ENCODE measurements at regions of chr2 and their contacts with region 1.

Region 1: GRCh38 chr2:46887028-46887885 is 28.3 kb downstream of the MCFD2 start:
- DNase-seq: no peak
- H3K4me3 ChIP-seq: no peak overlapping the region
- H3K27ac ChIP-seq: no peak overlapping the region
- H3K4me1 ChIP-seq: peaks cover 6% of the 10 kb centered on the region
- H3K27me3 ChIP-seq: no peaks in the 10 kb centered on the region
- CTCF ChIP-seq: no peak
- POLR2A ChIP-seq: no peak

Region 2: GRCh38 chr2:46481198-46482193 is 405.8 kb before region 1 on chr2:
- CTCF ChIA-PET with region 1: no interaction called
- POLR2A ChIA-PET with region 1: no interaction called
- dilution Hi-C with region 1: no loop called
- intact Hi-C with region 1: loop called (anchors 5 kb)
- DNase-seq: peak; percentile 91
- H3K4me3 ChIP-seq: no peak overlapping the region
- H3K27ac ChIP-seq: peak overlapping the region; percentile 58
- H3K4me1 ChIP-seq: peaks cover 17% of the 10 kb centered on the region
- H3K27me3 ChIP-seq: no peaks in the 10 kb centered on the region
- CTCF ChIP-seq: no peak
- POLR2A ChIP-seq: no peak

Region 3: GRCh38 chr2:46632349-46632748 is 254.9 kb before region 1 on chr2:
- CTCF ChIA-PET with region 1: interaction called, 15 read pairs
- POLR2A ChIA-PET with region 1: no interaction called
- dilution Hi-C with region 1: no loop called
- intact Hi-C with region 1: loop called (anchors 1 kb)
- DNase-seq: peak; percentile 79
- H3K4me3 ChIP-seq: no peak overlapping the region
- H3K27ac ChIP-seq: no peak overlapping the region
- H3K4me1 ChIP-seq: no peaks in the 10 kb centered on the region
- H3K27me3 ChIP-seq: no peaks in the 10 kb centered on the region
- CTCF ChIP-seq: peak; percentile 21 to 41
- POLR2A ChIP-seq: no peak

Region 4: GRCh38 chr2:46650556-46651001 is 236.7 kb before region 1 on chr2:
- CTCF ChIA-PET with region 1: interaction called, 13 read pairs
- POLR2A ChIA-PET with region 1: no interaction called
- dilution Hi-C with region 1: no loop called
- intact Hi-C with region 1: loop called (anchors 1 kb)
- DNase-seq: peak; percentile 80
- H3K4me3 ChIP-seq: no peak overlapping the region
- H3K27ac ChIP-seq: no peak overlapping the region
- H3K4me1 ChIP-seq: peaks cover 4% of the 10 kb centered on the region
- H3K27me3 ChIP-seq: no peaks in the 10 kb centered on the region
- CTCF ChIP-seq: peak; percentile 81 to 83
- POLR2A ChIP-seq: no peak

Region 5: GRCh38 chr2:46776687-46777327 is 110.5 kb before region 1 on chr2:
- CTCF ChIA-PET with region 1: interaction called, 3 read pairs
- POLR2A ChIA-PET with region 1: no interaction called
- dilution Hi-C with region 1: no loop called
- intact Hi-C with region 1: loop called (anchors 1 kb)
- DNase-seq: peak; percentile 71
- H3K4me3 ChIP-seq: no peak overlapping the region
- H3K27ac ChIP-seq: no peak overlapping the region
- H3K4me1 ChIP-seq: no peaks in the 10 kb centered on the region
- H3K27me3 ChIP-seq: no peaks in the 10 kb centered on the region
- CTCF ChIP-seq: peak; percentile 72 to 75
- POLR2A ChIP-seq: no peak

Region 6: DNA sequence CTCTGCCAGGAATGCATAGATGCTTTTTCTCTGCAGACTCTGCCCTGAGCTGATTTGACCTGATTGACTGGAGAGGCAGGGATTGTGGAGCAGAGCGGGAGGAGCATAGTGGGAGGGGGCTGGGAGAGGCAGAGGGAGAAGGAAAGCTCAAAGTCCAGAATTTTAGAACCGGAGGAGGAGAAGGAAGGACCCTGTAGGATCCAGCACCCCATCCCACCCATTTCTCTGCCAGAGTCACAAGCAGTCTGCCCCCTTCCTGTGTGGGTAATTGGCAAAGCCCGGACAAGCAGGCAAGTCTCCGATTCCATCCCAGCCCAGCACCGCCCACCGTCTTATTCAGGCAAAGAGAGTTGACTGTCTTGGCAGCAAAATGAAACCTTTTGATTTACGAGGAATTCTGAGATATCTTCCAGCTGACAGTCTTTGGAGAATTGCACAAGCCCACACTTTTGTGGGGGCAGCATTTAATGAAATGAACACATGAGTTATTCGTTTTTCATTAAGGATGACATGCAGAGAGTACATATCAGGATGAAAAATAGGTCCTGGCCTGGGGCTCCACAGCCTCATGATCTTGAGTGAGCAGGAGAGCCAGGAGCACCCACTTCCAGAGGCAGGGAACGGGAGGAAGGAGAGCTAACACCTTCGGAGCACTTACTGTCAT is 74.8 kb before region 1 on chr2:
- CTCF ChIA-PET with region 1: interaction called, 4 read pairs
- POLR2A ChIA-PET with region 1: no interaction called
- dilution Hi-C with region 1: no loop called
- intact Hi-C with region 1: loop called (anchors 5 kb)
- DNase-seq: peak; percentile 54
- H3K4me3 ChIP-seq: no peak overlapping the region
- H3K27ac ChIP-seq: no peak overlapping the region
- H3K4me1 ChIP-seq: peaks cover 17% of the 10 kb centered on the region
- H3K27me3 ChIP-seq: no peaks in the 10 kb centered on the region
- CTCF ChIP-seq: no peak
- POLR2A ChIP-seq: no peak

Region 7: GRCh38 chr2:46841621-46842020 is 45.6 kb before region 1 on chr2:
- CTCF ChIA-PET with region 1: no interaction called
- POLR2A ChIA-PET with region 1: no interaction called
- dilution Hi-C with region 1: no loop called
- intact Hi-C with region 1: no loop called
- DNase-seq: no peak
- H3K4me3 ChIP-seq: no peak overlapping the region
- H3K27ac ChIP-seq: no peak overlapping the region
- H3K4me1 ChIP-seq: peaks cover 4% of the 10 kb centered on the region
- H3K27me3 ChIP-seq: no peaks in the 10 kb centered on the region
- CTCF ChIP-seq: no peak
- POLR2A ChIP-seq: no peak

Region 8: DNA sequence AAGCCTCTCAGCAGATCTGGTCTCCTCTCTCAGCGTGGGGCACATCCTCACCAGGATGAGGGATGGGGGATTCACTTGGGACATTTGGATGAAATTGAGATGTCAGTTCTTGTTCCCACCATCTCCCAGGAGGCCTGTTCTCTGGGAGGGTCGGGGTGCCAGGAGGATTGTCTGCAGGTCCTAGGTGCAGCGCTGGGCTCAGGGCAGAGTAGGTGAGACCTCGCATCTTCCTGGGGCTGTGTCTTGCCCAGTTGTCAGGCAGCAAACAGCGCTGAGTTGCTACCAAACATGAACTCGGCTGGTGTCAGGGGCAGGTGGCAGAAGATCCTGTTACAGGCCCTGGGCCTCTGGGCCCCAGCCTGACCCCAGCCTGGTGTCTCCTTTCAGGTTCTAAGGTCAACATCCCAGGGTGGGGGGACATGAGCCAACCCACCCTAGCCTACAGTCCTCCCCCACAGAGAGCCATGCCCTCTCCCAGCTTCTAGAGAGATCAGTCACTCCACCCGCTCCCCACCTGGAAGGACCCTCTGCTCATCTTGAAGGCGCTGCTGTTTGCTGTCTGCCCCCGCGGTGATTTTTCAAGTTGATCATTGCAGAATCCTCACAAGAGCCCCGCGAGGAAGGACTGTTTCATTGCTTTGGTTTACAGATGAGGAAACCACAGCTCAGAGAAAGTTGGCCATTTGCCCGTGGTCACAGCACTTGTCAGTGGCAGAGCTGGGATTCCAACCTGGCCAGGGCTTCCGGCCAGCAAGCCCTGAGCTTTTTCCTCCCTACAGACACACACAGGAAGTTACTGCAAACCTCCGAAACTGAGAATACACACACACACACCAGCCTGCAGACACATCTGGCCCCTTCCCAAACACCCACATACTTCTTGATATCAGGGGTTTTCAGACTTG is 183.9 kb after region 1 on chr2:
- CTCF ChIA-PET with region 1: no interaction called
- POLR2A ChIA-PET with region 1: no interaction called
- dilution Hi-C with region 1: no loop called
- intact Hi-C with region 1: no loop called
- DNase-seq: peak; percentile 65
- H3K4me3 ChIP-seq: no peak overlapping the region
- H3K27ac ChIP-seq: peak overlapping the region; percentile 44
- H3K4me1 ChIP-seq: peaks cover 40% of the 10 kb centered on the region
- H3K27me3 ChIP-seq: no peaks in the 10 kb centered on the region
- CTCF ChIP-seq: no peak
- POLR2A ChIP-seq: no peak

Measured in endothelial cell of umbilical vein (primary cell).